GM10248 (cell line): ENCODE measurements at regions of chr13 and their contacts with region 1.

Region 1: GRCh38 chr13:111202745-111203144 is 87.6 kb downstream of the ARHGEF7 start:
- DNase-seq: peak; percentile 74
- CTCF ChIP-seq: no peak

Region 2: GRCh38 chr13:111216166-111216960 is 13.6 kb after region 1 on chr13:
- CTCF ChIA-PET with region 1: interaction called, 17 read pairs
- POLR2A ChIA-PET with region 1: no interaction called
- DNase-seq: peak; percentile 56
- CTCF ChIP-seq: peak; percentile 67

Region 3: DNA sequence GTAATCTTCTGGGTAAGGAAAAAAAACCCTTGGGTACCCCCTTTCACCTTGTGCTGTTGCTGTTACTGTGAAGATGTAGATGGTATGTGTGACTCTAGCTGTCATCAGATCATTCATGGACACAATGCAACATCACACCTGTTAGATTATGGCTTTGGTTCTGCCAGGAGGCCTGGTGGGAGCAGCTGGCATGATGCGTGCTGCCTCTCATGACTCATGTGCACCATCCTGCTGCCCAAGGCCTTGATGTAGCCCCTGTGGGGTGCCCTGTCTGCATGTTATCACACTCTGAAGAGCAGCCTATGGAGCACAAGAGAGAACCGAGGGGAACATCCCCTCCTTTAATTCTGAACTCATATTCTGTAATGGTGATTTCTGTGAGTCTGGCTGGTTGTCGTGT is 60.0 kb after region 1 on chr13:
- CTCF ChIA-PET with region 1: no interaction called
- POLR2A ChIA-PET with region 1: interaction called, 10 read pairs
- DNase-seq: no peak
- CTCF ChIP-seq: no peak

Region 4: DNA sequence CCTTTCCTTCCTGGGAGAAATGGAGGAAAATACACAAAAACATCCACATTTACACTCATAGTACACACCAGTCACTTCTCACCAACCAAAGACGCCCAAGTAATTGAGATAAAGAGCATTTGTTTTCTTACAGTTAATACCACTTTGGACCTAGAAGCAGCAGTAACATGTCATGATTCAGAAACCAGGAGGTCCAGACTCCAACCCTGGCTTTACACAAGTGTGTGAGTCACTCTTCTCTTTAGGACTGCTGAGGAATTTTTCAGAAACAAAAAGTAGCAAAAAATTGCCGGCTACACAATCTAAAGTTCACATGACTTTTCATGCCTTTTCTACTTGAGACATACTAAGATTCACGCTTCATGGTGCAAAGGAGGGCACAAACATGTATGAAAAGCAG is 1343.1 kb after region 1 on chr13:
- CTCF ChIA-PET with region 1: no interaction called
- POLR2A ChIA-PET with region 1: no interaction called
- DNase-seq: no peak
- CTCF ChIP-seq: no peak